B cell (primary cell): ENCODE measurements at regions of chr9 and their contacts with region 1.

Region 1: DNA sequence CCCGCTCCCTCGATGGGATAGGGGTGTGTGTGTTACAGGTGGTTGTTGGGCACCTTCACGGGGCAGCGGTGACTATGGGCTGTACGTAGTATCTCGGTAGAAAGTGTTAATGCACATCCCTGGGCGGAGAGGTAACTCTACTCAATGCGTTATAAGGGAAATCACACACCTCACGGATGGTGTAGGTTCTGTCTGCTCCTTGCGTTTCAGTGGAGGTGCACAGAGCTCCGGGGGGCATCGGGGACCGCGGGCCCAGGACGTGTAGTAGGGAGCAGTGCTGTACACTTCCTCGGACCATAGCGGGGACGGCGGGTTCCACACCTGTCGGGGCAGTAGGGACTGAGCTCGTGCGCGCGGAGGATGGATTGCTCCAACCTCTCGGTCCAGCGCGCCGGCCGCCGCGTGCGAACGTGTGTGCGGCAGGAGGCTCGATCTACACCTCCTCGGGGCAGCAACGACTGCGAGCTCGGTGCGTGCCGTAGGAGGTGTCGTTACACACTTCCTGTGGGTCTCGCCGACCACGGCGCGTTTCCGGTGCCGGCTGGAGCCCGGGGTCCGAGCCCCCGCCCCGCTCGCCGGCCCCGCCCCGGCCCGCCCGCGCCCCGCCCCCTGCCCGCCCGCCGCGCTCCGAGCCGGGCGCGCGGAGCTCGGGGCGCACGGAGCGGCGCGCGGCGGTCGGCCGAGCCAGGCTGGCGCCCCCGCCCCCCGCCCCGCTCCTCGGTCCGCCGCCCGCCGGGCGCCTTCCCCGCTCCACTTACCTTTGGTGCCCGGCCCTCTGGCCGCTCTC is at the start of gene KIAA1958:
- DNase-seq: peak; percentile 88
- ATAC-seq: peak; percentile 87
- H3K4me3 ChIP-seq: peak within 1 kb of the TSS; percentile 71 to 85 (median 77)
- H3K4me3 Mint-ChIP-seq: peak within 1 kb of the TSS; percentile 100
- H3K27ac ChIP-seq: peak within 1 kb of the TSS; percentile 58 to 69
- H3K27ac Mint-ChIP-seq: peak within 1 kb of the TSS; percentile 96
- H3K4me1 ChIP-seq: peaks cover 5 to 13% of the 10 kb centered on the region in 2 donors
- H3K4me1 Mint-ChIP-seq: peaks cover 22% of the 10 kb centered on the region
- H3K27me3 ChIP-seq: no peaks in the 10 kb centered on the region
- H3K27me3 Mint-ChIP-seq: no peaks in the 10 kb centered on the region
- CTCF ChIP-seq: no peak
- total RNA-seq, gene KIAA1958: 15.3 and 17.2 TPM in 2 replicates

Region 2: GRCh38 chr9:111909441-111909840 is 577.0 kb before region 1 on chr9:
- CTCF ChIA-PET with region 1: no interaction called
- POLR2A ChIA-PET with region 1: no interaction called
- intact Hi-C with region 1: loop called (anchors 10 kb)
- DNase-seq: peak; percentile 61
- ATAC-seq: peak; percentile 67
- H3K4me3 ChIP-seq: no peak overlapping the region
- H3K4me3 Mint-ChIP-seq: peak overlapping the region; percentile 72
- H3K27ac ChIP-seq: peak overlapping the region in 1 of 2 donors; percentile 51
- H3K27ac Mint-ChIP-seq: peak overlapping the region; percentile 76
- H3K4me1 ChIP-seq: peaks cover 92 to 93% of the 10 kb centered on the region in 2 donors
- H3K4me1 Mint-ChIP-seq: peaks cover 88% of the 10 kb centered on the region
- H3K27me3 ChIP-seq: no peaks in the 10 kb centered on the region
- H3K27me3 Mint-ChIP-seq: no peaks in the 10 kb centered on the region
- CTCF ChIP-seq: no peak

Region 3: DNA sequence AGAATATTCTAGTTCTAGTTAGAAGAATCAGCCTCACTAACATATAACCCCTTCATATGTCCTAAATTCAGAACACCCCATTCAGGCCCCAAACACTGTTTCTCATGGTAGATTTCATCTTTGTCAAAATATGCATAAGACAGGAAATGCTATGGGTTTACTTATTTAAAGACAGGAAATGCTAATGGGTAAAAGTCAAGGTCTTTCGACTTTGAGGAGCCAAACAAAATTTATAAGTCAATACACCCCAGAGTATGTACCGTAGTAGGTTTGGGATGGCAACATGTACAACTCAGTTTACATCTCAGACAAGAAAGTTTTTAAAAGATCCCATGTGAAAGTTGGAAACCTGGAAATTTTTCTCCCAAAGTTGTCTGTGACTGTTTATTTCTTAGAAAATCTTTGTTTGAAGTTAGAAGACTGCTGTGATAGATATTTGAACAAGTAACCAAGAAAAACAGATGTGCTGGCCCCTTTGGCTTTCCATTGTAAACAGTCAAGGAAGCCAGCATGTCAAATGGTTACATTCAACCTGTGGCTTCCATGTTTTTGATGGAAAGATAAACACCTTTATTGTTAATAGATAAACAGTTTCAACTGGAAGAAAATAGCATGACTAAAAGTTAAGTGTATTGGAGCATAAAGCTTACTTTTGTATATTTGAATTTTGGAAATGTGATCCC is 129.3 kb after region 1 on chr9:
- CTCF ChIA-PET with region 1: no interaction called
- POLR2A ChIA-PET with region 1: no interaction called
- intact Hi-C with region 1: no loop called
- DNase-seq: no peak
- ATAC-seq: no peak
- H3K4me3 ChIP-seq: no peak overlapping the region
- H3K4me3 Mint-ChIP-seq: no peak overlapping the region
- H3K27ac ChIP-seq: no peak overlapping the region
- H3K27ac Mint-ChIP-seq: no peak overlapping the region
- H3K4me1 ChIP-seq: no peaks in the 10 kb centered on the region
- H3K4me1 Mint-ChIP-seq: peaks cover 5% of the 10 kb centered on the region
- H3K27me3 ChIP-seq: no peaks in the 10 kb centered on the region
- H3K27me3 Mint-ChIP-seq: no peaks in the 10 kb centered on the region
- CTCF ChIP-seq: no peak

Region 4: GRCh38 chr9:112750111-112750767 is 263.8 kb after region 1 on chr9 and contains the start of gene SNX30:
- CTCF ChIA-PET with region 1: no interaction called
- POLR2A ChIA-PET with region 1: no interaction called
- intact Hi-C with region 1: loop called (anchors 1 kb)
- DNase-seq: peak; percentile 88
- ATAC-seq: peak; percentile 94
- H3K4me3 ChIP-seq: peak within 1 kb of the TSS; percentile 67 to 90 (median 83)
- H3K4me3 Mint-ChIP-seq: peak within 1 kb of the TSS; percentile 91
- H3K27ac ChIP-seq: peak within 1 kb of the TSS; percentile 55 to 69
- H3K27ac Mint-ChIP-seq: peak within 1 kb of the TSS; percentile 92
- H3K4me1 ChIP-seq: peaks cover 24 to 44% of the 10 kb centered on the region in 2 donors
- H3K4me1 Mint-ChIP-seq: peaks cover 45% of the 10 kb centered on the region
- H3K27me3 ChIP-seq: no peaks in the 10 kb centered on the region
- H3K27me3 Mint-ChIP-seq: no peaks in the 10 kb centered on the region
- CTCF ChIP-seq: no peak
- total RNA-seq, gene SNX30: 18.8 and 20.6 TPM in 2 replicates